ENCODE measurements at regions of chr12 and their contacts with region 1.

Region 1: DNA sequence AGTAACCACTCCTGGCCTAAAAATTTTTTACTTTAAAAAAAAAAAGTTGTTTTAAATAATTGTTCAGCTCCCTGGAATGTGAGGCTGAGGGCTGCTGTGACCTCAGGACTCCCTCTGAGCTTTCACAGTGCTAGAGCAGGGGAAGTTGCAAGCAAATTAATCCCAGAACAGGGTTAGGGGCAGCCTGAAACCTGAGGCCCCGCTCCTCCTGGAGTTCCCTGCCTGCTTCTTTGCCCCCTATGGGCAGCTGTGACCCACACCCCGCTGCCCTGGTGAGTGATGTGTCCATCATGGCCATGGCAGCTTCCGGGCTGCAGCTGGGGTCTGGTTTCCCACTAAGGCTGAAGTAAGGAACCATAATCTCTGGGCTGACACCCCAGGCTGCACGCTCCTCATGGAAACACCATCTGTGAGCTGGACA is 9.5 kb downstream of the RITA1 start:
- DNase-seq: no peak
- H3K4me3 ChIP-seq: no peak overlapping the region
- H3K27me3 ChIP-seq: no peaks in the 10 kb centered on the region
- CTCF ChIP-seq: no peak

Region 2: DNA sequence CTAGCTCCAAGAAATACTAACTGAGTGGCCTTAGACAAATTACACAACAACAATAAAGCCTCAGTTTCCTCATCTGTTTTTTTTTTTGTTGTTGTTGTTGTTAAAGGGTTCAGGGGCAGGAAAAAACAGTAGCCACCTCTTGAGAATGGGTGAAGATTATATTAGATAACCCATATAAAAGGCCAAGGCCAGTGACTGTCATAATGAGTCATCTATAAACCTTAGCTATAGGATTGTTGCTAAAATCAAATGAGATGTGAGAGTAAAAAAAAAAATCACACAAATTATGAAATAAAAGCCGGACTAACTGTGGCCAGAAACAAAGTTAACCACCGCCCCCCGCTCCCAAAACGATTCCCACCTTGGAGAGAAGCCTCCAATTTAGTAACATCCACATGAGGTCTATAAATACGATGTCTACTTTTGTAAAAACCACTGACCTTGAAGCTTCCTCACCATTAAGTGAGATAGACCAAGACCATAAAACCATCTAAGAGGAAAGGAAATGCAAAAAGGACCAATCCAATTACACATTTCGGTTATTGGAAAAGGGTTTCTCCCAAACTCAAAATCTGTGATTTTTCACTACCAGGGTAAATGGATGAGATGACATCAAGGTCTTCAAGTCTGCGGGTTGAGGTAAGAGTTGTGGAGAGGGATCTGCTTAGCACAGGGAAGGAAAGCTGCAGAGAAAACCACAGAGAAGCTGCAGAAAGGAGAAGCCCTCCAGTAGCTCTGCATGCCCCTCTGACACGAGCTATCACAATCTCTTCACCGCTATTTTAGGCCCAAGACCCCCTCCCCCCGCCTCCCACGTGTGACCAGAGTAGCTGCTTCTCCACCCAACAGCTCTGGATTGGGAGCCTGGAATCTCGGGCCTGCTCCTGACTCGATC is 1087.4 kb before region 1 on chr12:
- CTCF ChIA-PET with region 1: no interaction called
- POLR2A ChIA-PET with region 1: interaction called, 11 read pairs
- DNase-seq: no peak
- H3K4me3 ChIP-seq: peak overlapping the region; percentile 79
- H3K27me3 ChIP-seq: no peaks in the 10 kb centered on the region
- CTCF ChIP-seq: no peak

Region 3: GRCh38 chr12:112803620-112804282 is 391.2 kb before region 1 on chr12:
- CTCF ChIA-PET with region 1: no interaction called
- POLR2A ChIA-PET with region 1: no interaction called
- DNase-seq: no peak
- H3K4me3 ChIP-seq: no peak overlapping the region
- H3K27me3 ChIP-seq: no peaks in the 10 kb centered on the region; the same call in 1 of the 2 replicates
- CTCF ChIP-seq: no peak

Measured in BJ (cell line).